ENCODE measurements at regions of chr10 and their contacts with region 1.

Region 1: GRCh38 chr10:13382703-13383398 is 34.8 kb upstream of the SEPHS1 start:
- DNase-seq: peak; percentile 58 to 62
- H3K4me3 ChIP-seq: peak overlapping the region; percentile 40
- H3K4me3 Mint-ChIP-seq: peak overlapping the region; percentile 90
- H3K27ac Mint-ChIP-seq: peak overlapping the region; percentile 81
- H3K4me1 ChIP-seq: peaks cover 7% of the 10 kb centered on the region
- H3K4me1 Mint-ChIP-seq: peaks cover 7% of the 10 kb centered on the region
- H3K27me3 ChIP-seq: no peaks in the 10 kb centered on the region
- H3K27me3 Mint-ChIP-seq: no peaks in the 10 kb centered on the region
- CTCF ChIP-seq: no peak

Region 2: DNA sequence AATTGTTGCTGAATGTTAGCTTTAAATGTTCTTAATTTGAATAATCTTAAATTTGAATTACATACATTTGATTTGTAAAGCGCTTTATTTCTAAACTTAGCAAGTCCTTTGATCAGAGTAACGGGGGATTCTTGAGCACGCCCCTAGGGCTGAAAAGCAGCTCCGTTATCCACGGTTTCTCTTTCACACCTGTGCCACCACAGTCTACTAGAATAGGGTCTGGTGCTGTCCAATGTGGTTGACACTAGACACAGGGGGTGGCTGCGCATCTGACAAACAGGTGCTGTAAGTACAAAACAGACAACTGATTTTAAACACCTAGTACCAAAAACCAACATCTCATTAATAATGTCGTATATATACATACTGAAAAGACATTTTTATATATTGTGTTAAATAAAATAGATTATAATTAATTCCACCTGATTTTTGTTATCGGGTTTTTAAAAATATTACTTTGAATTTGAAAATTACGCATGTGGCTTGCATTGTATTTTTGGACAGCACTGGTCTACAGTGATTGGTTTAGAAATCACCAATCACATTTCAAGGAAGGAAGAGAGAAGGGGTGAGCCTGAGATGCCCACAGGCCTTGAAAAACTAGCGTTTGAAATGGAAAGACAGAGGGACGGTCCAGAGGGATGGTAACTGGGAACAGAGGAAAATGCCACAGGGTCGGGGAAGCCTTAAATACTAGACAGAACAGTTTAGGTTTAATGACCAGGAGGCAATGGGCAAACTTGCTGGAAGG is 42.0 kb before region 1 on chr10:
- CTCF ChIA-PET with region 1: no interaction called
- POLR2A ChIA-PET with region 1: no interaction called
- intact Hi-C with region 1: no loop called
- DNase-seq: no peak
- H3K4me3 ChIP-seq: no peak overlapping the region
- H3K4me3 Mint-ChIP-seq: no peak overlapping the region
- H3K27ac Mint-ChIP-seq: no peak overlapping the region
- H3K4me1 ChIP-seq: no peaks in the 10 kb centered on the region
- H3K4me1 Mint-ChIP-seq: peaks cover 14% of the 10 kb centered on the region
- H3K27me3 ChIP-seq: no peaks in the 10 kb centered on the region
- H3K27me3 Mint-ChIP-seq: no peaks in the 10 kb centered on the region
- CTCF ChIP-seq: no peak

Region 3: DNA sequence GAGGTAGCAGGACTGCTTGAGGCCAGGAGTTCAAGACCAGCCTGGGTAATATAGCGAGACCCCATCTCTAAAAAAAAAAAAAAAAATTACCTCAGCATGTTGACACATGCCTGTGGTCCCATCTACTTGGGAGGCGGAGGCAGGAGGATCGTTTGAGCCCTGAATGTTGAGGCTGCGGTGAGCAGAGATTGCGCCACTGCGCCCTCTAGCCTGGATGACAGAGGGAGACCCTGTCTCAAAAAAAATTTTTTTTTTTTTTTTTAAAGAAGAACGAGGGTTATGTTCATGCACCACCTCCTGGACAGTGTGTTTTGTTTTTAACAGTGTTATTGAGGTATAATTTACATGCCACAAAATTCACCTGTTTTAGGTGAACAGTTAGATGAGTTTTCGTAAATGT is 16.4 kb after region 1 on chr10:
- CTCF ChIA-PET with region 1: no interaction called
- POLR2A ChIA-PET with region 1: no interaction called
- intact Hi-C with region 1: loop called (anchors 2 kb)
- DNase-seq: peak in 1 of 2 experiments; percentile 45
- H3K4me3 ChIP-seq: no peak overlapping the region
- H3K4me3 Mint-ChIP-seq: no peak overlapping the region
- H3K27ac Mint-ChIP-seq: no peak overlapping the region
- H3K4me1 ChIP-seq: peaks cover 2% of the 10 kb centered on the region; the same call in 1 of the 2 replicates
- H3K4me1 Mint-ChIP-seq: peaks cover 15% of the 10 kb centered on the region
- H3K27me3 ChIP-seq: no peaks in the 10 kb centered on the region
- H3K27me3 Mint-ChIP-seq: no peaks in the 10 kb centered on the region
- CTCF ChIP-seq: no peak

Region 4: GRCh38 chr10:13414894-13415293 is 32.0 kb after region 1 on chr10:
- CTCF ChIA-PET with region 1: interaction called, 3 read pairs
- POLR2A ChIA-PET with region 1: interaction called, 3 read pairs
- intact Hi-C with region 1: loop called (anchors 1 kb)
- DNase-seq: peak; percentile 82 to 87
- H3K4me3 ChIP-seq: no peak overlapping the region
- H3K4me3 Mint-ChIP-seq: no peak overlapping the region
- H3K27ac Mint-ChIP-seq: no peak overlapping the region
- H3K4me1 ChIP-seq: peaks cover 23% of the 10 kb centered on the region
- H3K4me1 Mint-ChIP-seq: peaks cover 20% of the 10 kb centered on the region
- H3K27me3 ChIP-seq: no peaks in the 10 kb centered on the region
- H3K27me3 Mint-ChIP-seq: no peaks in the 10 kb centered on the region
- CTCF ChIP-seq: peak; percentile 58 to 70